K562 (cell line): ENCODE measurements at regions of chr22 and their contacts with region 1.

Region 1: GRCh38 chr22:38503021-38503420 is 3.1 kb downstream of the DDX17 start:
- DNase-seq: no peak
- ATAC-seq: no peak
- H3K4me3 ChIP-seq: peak overlapping the region; percentile 90; the same call in 1 of the 2 replicates
- H3K27ac ChIP-seq: peak overlapping the region; percentile 96; the same call in 1 of the 3 replicates
- H3K4me1 ChIP-seq: peaks cover 12 to 22% of the 10 kb centered on the region in 2 experiments
- H3K27me3 ChIP-seq: no peaks in the 10 kb centered on the region
- CTCF ChIP-seq: no peak
- EP300 ChIP-seq: no peak
- POLR2A ChIP-seq: no peak
- RAD21 ChIP-seq: no peak

Region 2: GRCh38 chr22:38291201-38291777 is 211.7 kb before region 1 on chr22:
- CTCF ChIA-PET with region 1: no interaction called
- POLR2A ChIA-PET with region 1: no interaction called
- in situ Hi-C with region 1: no loop called
- intact Hi-C with region 1: no loop called
- DNase-seq: no peak
- ATAC-seq: no peak
- H3K4me3 ChIP-seq: no peak overlapping the region
- H3K27ac ChIP-seq: no peak overlapping the region
- H3K4me1 ChIP-seq: peaks cover 0 to 7% of the 10 kb centered on the region in 2 experiments; a peak in 2 of 5 replicates
- H3K27me3 ChIP-seq: no peaks in the 10 kb centered on the region
- CTCF ChIP-seq: no peak
- EP300 ChIP-seq: no peak
- POLR2A ChIP-seq: no peak
- RAD21 ChIP-seq: no peak

Region 3: GRCh38 chr22:38490915-38491314 is 12.1 kb before region 1 on chr22:
- CTCF ChIA-PET with region 1: no interaction called
- POLR2A ChIA-PET with region 1: interaction called, 15 read pairs
- in situ Hi-C with region 1: no loop called
- intact Hi-C with region 1: no loop called
- DNase-seq: no peak
- ATAC-seq: peak; percentile 63
- H3K4me3 ChIP-seq: no peak overlapping the region
- H3K27ac ChIP-seq: peak overlapping the region; percentile 53; the same call in 1 of the 3 replicates
- H3K4me1 ChIP-seq: no peaks in the 10 kb centered on the region
- H3K27me3 ChIP-seq: no peaks in the 10 kb centered on the region
- CTCF ChIP-seq: no peak
- EP300 ChIP-seq: no peak
- POLR2A ChIP-seq: no peak
- RAD21 ChIP-seq: no peak

Region 4: DNA sequence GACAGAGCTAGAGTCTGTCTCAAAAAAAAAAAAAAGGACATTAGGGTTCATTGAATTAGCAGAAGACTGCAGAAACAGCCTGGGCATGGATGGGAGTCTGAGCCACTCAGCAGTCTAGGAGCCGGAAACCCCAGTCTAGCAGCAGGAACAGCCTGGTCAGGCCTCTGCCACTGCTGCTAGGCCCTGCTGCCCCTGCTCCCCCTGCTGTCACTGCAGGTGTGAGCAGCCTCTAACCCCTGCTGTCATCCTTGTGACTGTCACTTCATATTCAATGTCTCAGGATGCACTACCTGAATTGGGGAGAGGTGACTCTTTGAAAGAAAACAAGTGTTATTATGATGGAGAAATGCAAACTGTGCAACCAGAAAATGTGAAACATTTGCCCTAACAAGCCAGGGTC is 10.0 kb after region 1 on chr22:
- CTCF ChIA-PET with region 1: interaction called, 5 read pairs
- POLR2A ChIA-PET with region 1: interaction called, 12 read pairs
- in situ Hi-C with region 1: no loop called
- intact Hi-C with region 1: no loop called
- DNase-seq: peak; percentile 29 to 63 (median 46)
- ATAC-seq: peak; percentile 89
- H3K4me3 ChIP-seq: no peak overlapping the region
- H3K27ac ChIP-seq: no peak overlapping the region; the same call in 2 of the 3 replicates
- H3K4me1 ChIP-seq: peaks cover 21 to 35% of the 10 kb centered on the region in 2 experiments; a peak in 4 of 5 replicates
- H3K27me3 ChIP-seq: no peaks in the 10 kb centered on the region
- CTCF ChIP-seq: peak; percentile 45 to 64 (median 61)
- EP300 ChIP-seq: no peak
- POLR2A ChIP-seq: no peak
- RAD21 ChIP-seq: peak in 1 of 2 experiments; percentile 38; a peak in 2 of 4 replicates